Gastrocnemius medialis (tissue), 4 donors: ENCODE measurements at regions of chr6 and their contacts with region 1.

Region 1: DNA sequence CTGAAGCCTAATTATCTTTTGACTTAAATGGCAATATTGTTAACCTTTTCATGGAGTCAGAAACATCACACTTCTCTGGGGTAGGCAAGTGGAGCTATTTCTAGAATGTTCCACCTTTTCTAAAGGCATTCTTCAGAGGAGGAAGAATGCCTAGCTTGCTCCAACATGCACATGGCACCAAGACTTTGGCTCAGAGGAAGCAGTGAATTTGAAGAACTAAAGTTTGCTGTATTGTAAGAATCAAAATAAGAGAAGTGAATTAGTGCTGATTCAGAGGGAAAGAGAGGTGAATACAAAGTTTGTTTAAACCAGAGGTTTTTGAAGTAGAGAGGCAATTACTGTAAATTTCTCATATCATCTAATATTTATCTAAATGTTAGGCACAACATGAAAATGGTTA is 92.2 kb downstream of the SOBP start:
- DNase-seq: no peak
- ATAC-seq: no peak
- H3K4me3 ChIP-seq: no peak overlapping the region
- H3K27ac ChIP-seq: no peak overlapping the region
- H3K4me1 ChIP-seq: peaks cover 7 to 8% of the 10 kb centered on the region in 2 donors
- H3K27me3 ChIP-seq: no peaks in the 10 kb centered on the region
- CTCF ChIP-seq: no peak
- POLR2A ChIP-seq: no peak

Region 2: GRCh38 chr6:107488875-107489635 is 93.0 kb before region 1 on chr6:
- in situ Hi-C with region 1: no loop called
- intact Hi-C with region 1: no loop called
- DNase-seq: peak in 1 of 2 donors; percentile 25
- ATAC-seq: no peak
- H3K4me3 ChIP-seq: peak overlapping the region; percentile 69 to 94 (median 84)
- H3K27ac ChIP-seq: peak overlapping the region; percentile 90 to 95 (median 92)
- H3K4me1 ChIP-seq: peaks cover 19 to 27% of the 10 kb centered on the region in 2 donors
- H3K27me3 ChIP-seq: no peaks in the 10 kb centered on the region
- CTCF ChIP-seq: no peak
- POLR2A ChIP-seq: peak; percentile 18 to 22

Region 3: DNA sequence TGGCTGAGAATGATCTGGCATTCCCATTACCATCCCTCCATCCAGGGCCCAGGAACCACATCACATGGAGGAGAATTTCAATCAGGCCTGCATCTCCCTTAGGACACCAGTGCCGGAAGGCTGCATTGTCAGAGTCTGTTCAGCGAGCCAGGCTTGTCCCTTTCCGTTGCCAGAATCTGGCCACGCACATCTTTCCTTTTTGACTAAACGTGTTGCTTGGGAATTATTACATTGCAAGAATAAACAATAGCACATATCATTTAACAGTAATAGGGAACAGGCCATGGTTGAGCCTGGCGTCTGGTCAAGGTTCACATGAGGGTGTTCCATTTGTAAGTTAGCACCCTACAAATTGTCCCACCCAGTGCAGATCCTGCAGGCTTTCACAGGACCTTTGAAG is 49.4 kb before region 1 on chr6:
- in situ Hi-C with region 1: no loop called
- intact Hi-C with region 1: loop called (anchors 2 kb)
- DNase-seq: peak in 1 of 2 donors; percentile 22
- ATAC-seq: peak in 1 of 2 donors; percentile 33
- H3K4me3 ChIP-seq: no peak overlapping the region
- H3K27ac ChIP-seq: peak overlapping the region in 1 of 4 donors; percentile 46
- H3K4me1 ChIP-seq: peaks cover 6 to 8% of the 10 kb centered on the region in 2 donors
- H3K27me3 ChIP-seq: no peaks in the 10 kb centered on the region
- CTCF ChIP-seq: no peak
- POLR2A ChIP-seq: no peak